Endothelial cell of umbilical vein (primary cell): ENCODE measurements at regions of chr10 and their contacts with region 1.

Region 1: GRCh38 chr10:13776861-13777311 is 190.1 kb downstream of the PRPF18 start:
- DNase-seq: no peak
- H3K4me3 ChIP-seq: no peak overlapping the region
- H3K27ac ChIP-seq: peak overlapping the region; percentile 76
- H3K4me1 ChIP-seq: peaks cover 46% of the 10 kb centered on the region
- H3K27me3 ChIP-seq: no peaks in the 10 kb centered on the region
- CTCF ChIP-seq: no peak
- POLR2A ChIP-seq: no peak

Region 2: DNA sequence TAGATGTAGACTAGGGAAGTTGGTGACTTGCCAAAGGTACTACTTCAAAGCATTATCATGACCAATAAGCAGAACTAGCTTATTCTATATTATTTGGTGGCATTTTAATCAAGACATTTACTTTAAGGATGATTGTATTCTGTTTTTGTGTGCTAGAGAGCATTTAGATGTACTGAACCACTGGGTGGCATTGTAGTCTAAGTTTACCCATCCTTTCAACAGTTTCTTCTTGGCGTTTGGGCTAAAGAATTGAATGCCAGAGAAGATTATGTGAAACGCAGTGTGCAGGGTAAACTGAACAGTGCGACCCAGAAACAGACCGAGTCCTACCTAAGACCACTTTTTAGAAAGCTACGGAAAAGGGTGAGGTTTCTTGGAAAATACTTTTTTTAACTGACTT is 163.4 kb before region 1 on chr10:
- CTCF ChIA-PET with region 1: interaction called, 5 read pairs
- POLR2A ChIA-PET with region 1: no interaction called
- dilution Hi-C with region 1: no loop called
- intact Hi-C with region 1: loop called (anchors 1 kb)
- DNase-seq: peak; percentile 60
- H3K4me3 ChIP-seq: no peak overlapping the region
- H3K27ac ChIP-seq: no peak overlapping the region
- H3K4me1 ChIP-seq: peaks cover 2% of the 10 kb centered on the region
- H3K27me3 ChIP-seq: no peaks in the 10 kb centered on the region
- CTCF ChIP-seq: peak; percentile 20 to 27
- POLR2A ChIP-seq: no peak

Region 3: DNA sequence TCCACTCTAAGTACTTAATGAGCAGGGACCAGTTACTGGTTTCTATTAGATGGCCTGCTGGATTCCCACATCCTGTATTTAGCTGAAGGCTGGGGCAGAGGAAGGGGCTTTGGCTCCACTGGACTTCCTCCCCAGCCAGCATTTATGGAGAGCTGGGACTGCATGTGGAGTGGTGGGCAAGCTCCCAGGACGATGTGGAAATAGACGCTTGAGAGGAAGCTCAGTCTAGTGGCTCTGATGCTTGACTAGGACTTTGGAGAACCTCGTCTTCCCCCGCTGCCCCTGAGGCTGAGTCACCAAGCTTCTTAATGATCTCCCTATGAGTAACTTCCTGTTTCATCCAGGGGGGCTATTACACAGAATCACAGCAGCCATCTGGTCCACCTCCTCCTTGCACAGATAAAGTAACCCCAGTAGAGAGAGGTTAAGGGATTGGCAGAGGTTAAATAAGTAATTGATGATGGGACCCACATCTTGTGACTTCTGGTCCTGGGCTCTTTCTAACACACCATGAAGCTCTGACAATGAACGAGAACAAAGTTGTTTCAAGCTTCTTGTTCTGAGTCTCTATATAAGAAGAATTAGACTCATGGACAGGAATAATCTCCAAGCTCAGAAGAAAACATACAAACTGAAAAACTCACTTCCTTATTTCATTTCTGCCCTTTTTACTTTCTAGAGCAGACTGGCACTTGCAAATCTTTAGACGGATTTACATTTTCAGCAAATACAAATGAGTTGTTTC is 63.9 kb before region 1 on chr10:
- CTCF ChIA-PET with region 1: no interaction called
- POLR2A ChIA-PET with region 1: no interaction called
- dilution Hi-C with region 1: no loop called
- intact Hi-C with region 1: loop called (anchors 2 kb)
- DNase-seq: peak; percentile 96
- H3K4me3 ChIP-seq: no peak overlapping the region
- H3K27ac ChIP-seq: peak overlapping the region; percentile 92
- H3K4me1 ChIP-seq: peaks cover 43% of the 10 kb centered on the region
- H3K27me3 ChIP-seq: no peaks in the 10 kb centered on the region
- CTCF ChIP-seq: no peak
- POLR2A ChIP-seq: peak; percentile 65

Region 4: GRCh38 chr10:13758312-13758711 is 18.6 kb before region 1 on chr10:
- CTCF ChIA-PET with region 1: interaction called, 11 read pairs
- POLR2A ChIA-PET with region 1: no interaction called
- dilution Hi-C with region 1: no loop called
- intact Hi-C with region 1: loop called (anchors 1 kb)
- DNase-seq: peak; percentile 77
- H3K4me3 ChIP-seq: no peak overlapping the region
- H3K27ac ChIP-seq: peak overlapping the region; percentile 85
- H3K4me1 ChIP-seq: peaks cover 36% of the 10 kb centered on the region
- H3K27me3 ChIP-seq: no peaks in the 10 kb centered on the region
- CTCF ChIP-seq: no peak
- POLR2A ChIP-seq: no peak